ENCODE measurements at regions of chr19 and their contacts with region 1.

Region 1: GRCh38 chr19:11293433-11294389 is 2.2 kb upstream of the TSPAN16 start:
- DNase-seq: peak; percentile 97
- H3K4me3 ChIP-seq: no peak overlapping the region
- H3K27ac ChIP-seq: peak overlapping the region in 2 of 3 donors; percentile 10 to 17
- H3K4me1 ChIP-seq: peaks cover 0 to 7% of the 10 kb centered on the region in 2 donors
- H3K27me3 ChIP-seq: no peaks in the 10 kb centered on the region
- CTCF ChIP-seq: peak; percentile 91 to 100 (median 99)
- POLR2A ChIP-seq: peak in 1 of 2 donors; percentile 46

Region 2: DNA sequence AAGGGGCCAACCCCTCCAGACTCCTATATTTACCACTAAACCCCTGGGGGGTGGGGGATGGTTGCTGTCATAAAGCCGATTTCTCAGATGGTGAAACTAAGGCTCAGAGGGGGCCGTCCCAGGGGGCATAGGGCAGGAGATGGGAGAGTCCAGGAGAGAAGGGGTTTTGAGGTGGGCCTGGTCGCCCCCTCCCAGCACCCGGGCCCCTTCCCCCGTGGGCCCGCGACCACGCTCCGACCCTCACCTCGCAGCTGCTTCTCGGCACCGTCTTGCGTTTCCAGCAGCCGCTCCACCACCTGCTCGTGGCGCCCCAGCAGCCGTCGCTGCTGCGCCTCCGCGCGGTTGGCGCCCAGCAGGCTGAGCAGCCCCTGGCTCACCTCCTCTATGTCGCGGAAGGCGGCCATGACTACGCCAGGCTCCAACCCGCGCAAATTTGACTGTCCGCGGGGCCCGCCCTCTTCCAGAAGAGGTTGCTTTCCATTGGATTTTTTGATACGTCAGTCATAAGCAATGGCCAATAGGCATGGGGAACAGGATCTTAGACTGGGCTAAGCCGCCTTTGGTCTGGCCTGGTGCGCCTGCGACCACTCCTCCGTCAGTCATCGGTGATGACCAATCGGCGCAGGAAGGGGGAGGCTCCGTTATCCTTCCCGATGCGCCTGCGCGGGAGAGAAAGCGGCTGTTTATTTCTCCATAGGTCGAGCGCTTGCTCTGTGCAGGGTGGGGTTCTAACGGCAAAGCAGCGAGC is 138.2 kb before region 1 on chr19 and contains the start of gene SPC24:
- intact Hi-C with region 1: no loop called
- DNase-seq: peak; percentile 95
- H3K4me3 ChIP-seq: peak within 1 kb of the TSS; percentile 19 to 40 (median 33)
- H3K27ac ChIP-seq: peak within 1 kb of the TSS; percentile 22 to 94 (median 83)
- H3K4me1 ChIP-seq: peaks cover 27 to 29% of the 10 kb centered on the region in 2 donors
- H3K27me3 ChIP-seq: no peaks in the 10 kb centered on the region
- CTCF ChIP-seq: no peak
- POLR2A ChIP-seq: peak in 1 of 2 donors; percentile 72
- total RNA-seq, gene SPC24: 0.24 to 1.1 (median 0.78) TPM in 3 of 4 donors, not detected in the other

Region 3: GRCh38 chr19:11242864-11243797 is 50.6 kb before region 1 on chr19:
- intact Hi-C with region 1: no loop called
- DNase-seq: peak; percentile 92 to 94
- H3K4me3 ChIP-seq: no peak overlapping the region
- H3K27ac ChIP-seq: peak overlapping the region in 2 of 3 donors; percentile 3 to 52
- H3K4me1 ChIP-seq: peaks cover 0 to 20% of the 10 kb centered on the region in 2 donors
- H3K27me3 ChIP-seq: no peaks in the 10 kb centered on the region
- CTCF ChIP-seq: peak; percentile 6 to 83 (median 62)
- POLR2A ChIP-seq: peak in 1 of 2 donors; percentile 37

Region 4: DNA sequence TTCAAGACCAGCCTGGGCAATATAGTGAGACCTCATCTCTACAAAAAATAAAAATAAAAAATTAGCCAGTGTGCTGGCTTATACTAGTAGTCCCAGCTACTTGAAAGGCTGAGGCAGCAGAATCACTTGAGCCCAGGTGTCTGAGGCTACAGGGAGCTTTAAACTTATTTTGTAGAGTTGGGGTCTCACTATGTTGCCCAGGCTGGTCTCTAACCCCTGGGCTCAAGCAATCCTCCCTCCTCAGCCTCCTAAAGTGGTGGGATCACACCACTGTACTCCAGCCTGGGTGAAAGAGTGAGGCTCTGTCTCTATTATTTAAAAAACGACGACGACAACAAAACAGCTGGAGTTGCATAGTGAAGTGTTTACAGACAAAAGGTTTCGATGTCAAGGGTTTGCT is 37.8 kb after region 1 on chr19:
- intact Hi-C with region 1: no loop called
- DNase-seq: no peak
- H3K4me3 ChIP-seq: no peak overlapping the region
- H3K27ac ChIP-seq: no peak overlapping the region
- H3K4me1 ChIP-seq: no peaks in the 10 kb centered on the region
- H3K27me3 ChIP-seq: no peaks in the 10 kb centered on the region
- CTCF ChIP-seq: no peak
- POLR2A ChIP-seq: no peak

Region 5: GRCh38 chr19:11346092-11346940 is 52.6 kb after region 1 on chr19 and contains the starts of genes CCDC159 and TMEM205:
- intact Hi-C with region 1: loop called (anchors 10 kb)
- DNase-seq: peak; percentile 99
- H3K4me3 ChIP-seq: peak within 1 kb of the TSS; percentile 32 to 52 (median 37)
- H3K27ac ChIP-seq: peak within 1 kb of the TSS; percentile 73 to 90 (median 87)
- H3K4me1 ChIP-seq: peaks cover 17 to 28% of the 10 kb centered on the region in 2 donors
- H3K27me3 ChIP-seq: no peaks in the 10 kb centered on the region
- CTCF ChIP-seq: no peak
- POLR2A ChIP-seq: peak; percentile 27 to 74
- total RNA-seq, gene CCDC159: 27.0 to 36.9 (median 34.5) TPM
- total RNA-seq, gene TMEM205: 266 to 1,029 (median 650) TPM

Region 6: GRCh38 chr19:11444059-11444458 is 150.3 kb after region 1 on chr19:
- intact Hi-C with region 1: loop called (anchors 2 kb)
- DNase-seq: no peak
- H3K4me3 ChIP-seq: no peak overlapping the region
- H3K27ac ChIP-seq: no peak overlapping the region
- H3K4me1 ChIP-seq: no peaks in the 10 kb centered on the region
- H3K27me3 ChIP-seq: no peaks in the 10 kb centered on the region
- CTCF ChIP-seq: no peak
- POLR2A ChIP-seq: no peak

Region 7: DNA sequence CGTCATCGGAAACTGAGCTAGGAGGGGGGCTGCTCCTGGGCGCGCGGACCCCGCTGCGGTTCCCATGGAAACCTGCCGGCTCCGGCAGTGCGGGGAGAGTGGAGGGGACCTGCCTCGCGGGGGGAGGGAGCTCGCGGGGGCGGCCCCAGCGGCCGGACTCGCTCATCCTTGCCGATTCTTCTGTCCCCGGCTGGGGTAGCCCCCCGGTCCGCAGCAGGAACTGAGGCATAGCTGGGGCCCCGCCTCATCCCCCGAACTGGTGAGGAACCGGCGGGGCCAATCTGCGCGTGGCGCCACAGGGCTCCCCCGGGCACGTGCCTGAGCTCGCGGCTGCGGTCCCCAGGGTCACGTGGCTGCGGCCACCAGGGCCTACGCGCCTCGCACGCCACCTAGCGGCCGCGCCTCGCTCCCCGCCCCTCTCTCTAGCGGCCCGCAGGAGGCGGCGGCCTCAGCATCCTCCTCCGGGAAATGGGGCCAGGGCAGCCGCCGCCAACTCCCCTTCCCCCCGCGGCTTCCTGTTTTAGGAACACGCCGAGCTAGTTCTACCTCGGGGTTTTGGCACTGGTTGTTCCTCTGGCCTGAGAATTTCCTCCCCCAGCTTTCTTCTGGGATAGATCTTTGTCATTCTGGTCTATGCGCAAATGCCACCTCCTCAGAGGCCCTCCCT is 188.8 kb after region 1 on chr19:
- intact Hi-C with region 1: loop called (anchors 5 kb)
- DNase-seq: peak; percentile 76 to 78
- H3K4me3 ChIP-seq: no peak overlapping the region
- H3K27ac ChIP-seq: no peak overlapping the region
- H3K4me1 ChIP-seq: peaks cover 0 to 37% of the 10 kb centered on the region in 2 donors
- H3K27me3 ChIP-seq: peaks cover 24% of the 10 kb centered on the region
- CTCF ChIP-seq: peak; percentile 58 to 96 (median 94)
- POLR2A ChIP-seq: no peak

Region 8: GRCh38 chr19:11587302-11587974 is 293.7 kb after region 1 on chr19:
- intact Hi-C with region 1: loop called (anchors 5 kb)
- DNase-seq: peak; percentile 66 to 75
- H3K4me3 ChIP-seq: no peak overlapping the region
- H3K27ac ChIP-seq: no peak overlapping the region
- H3K4me1 ChIP-seq: no peaks in the 10 kb centered on the region
- H3K27me3 ChIP-seq: no peaks in the 10 kb centered on the region
- CTCF ChIP-seq: peak; percentile 78 to 92 (median 82)
- POLR2A ChIP-seq: no peak

Measured in thyroid gland (tissue), 4 donors.